HEK293 (cell line): ENCODE measurements at regions of chr1 and their contacts with region 1.

Region 1: GRCh38 chr1:155001675-155002463 is 733 bp upstream of the ZBTB7B start:
- H3K4me3 ChIP-seq: peak overlapping the region; percentile 50
- H3K27ac ChIP-seq: peak overlapping the region; percentile 83; the same call in 1 of the 2 replicates
- H3K4me1 ChIP-seq: peaks cover 13% of the 10 kb centered on the region
- CTCF ChIP-seq: peak; percentile 95

Region 2: GRCh38 chr1:154324669-154325582 is 676.9 kb before region 1 on chr1 and contains the start of gene ATP8B2:
- CTCF ChIA-PET with region 1: no interaction called
- POLR2A ChIA-PET with region 1: no interaction called
- H3K4me3 ChIP-seq: peak within 1 kb of the TSS; percentile 49
- H3K27ac ChIP-seq: peak within 1 kb of the TSS; percentile 25; the same call in 1 of the 2 replicates
- H3K4me1 ChIP-seq: peaks cover 12% of the 10 kb centered on the region
- CTCF ChIP-seq: peak; percentile 96

Region 3: DNA sequence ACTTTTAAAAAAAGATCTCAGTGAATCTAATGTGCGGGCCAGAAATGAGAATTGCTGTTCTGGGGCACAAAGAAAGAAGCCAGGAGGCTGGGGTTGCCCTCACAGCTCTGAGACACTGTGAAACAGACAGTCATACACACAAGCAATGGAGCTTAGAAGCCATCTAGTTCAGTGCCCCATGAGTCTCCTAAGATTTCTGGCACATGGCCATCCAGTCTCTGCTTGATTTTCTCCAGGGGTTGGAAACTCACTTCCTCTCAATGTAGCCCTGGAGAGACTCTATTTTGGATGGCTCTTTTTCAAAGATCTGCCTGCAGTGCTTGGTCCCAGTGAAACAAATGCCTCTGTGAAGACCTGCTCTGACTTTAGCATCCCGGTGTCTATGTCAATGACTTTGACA is 170.4 kb before region 1 on chr1:
- CTCF ChIA-PET with region 1: no interaction called
- POLR2A ChIA-PET with region 1: no interaction called
- H3K4me3 ChIP-seq: no peak overlapping the region
- H3K27ac ChIP-seq: no peak overlapping the region
- H3K4me1 ChIP-seq: no peaks in the 10 kb centered on the region
- CTCF ChIP-seq: no peak

Region 4: DNA sequence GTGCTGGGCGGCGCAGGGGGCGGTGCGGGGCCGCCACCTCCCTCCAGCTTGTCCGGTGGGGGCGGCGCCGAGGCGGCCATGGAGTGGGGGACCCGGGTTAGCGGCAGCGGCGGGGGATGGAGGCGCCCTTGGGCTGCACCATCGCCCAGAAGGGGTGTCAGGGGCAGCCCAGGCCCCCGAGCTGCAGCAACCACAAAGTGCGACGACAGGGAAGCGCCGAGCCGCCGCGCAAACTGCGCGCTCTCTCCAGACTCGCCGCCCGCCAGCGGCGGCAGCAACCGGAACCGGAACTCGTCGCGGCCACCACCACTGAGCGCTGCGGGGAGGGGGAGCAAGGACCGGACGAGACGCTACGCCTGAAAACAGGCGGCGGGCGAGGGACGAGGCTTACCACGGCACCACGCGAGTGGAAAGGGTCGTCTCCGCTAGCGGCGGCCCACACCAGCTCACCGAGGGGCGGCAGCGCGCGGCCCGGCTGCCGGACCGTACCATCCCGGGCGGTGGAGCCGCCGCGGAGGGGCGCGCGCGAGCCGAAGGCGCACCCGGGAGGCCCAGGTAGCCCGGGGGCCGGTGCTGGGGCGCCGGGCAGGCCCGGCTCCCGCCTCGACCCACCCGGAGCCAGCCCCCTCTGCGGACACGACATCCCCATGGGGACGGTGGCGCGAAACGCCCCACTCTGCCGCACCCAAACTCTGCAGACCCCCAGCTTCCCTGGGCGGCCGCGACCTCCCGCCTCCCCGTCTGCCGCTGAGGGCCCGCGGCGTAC is 40.2 kb before region 1 on chr1 and contains the start of gene PYGO2:
- CTCF ChIA-PET with region 1: interaction called, 12 read pairs
- POLR2A ChIA-PET with region 1: interaction called, 4 read pairs
- H3K4me3 ChIP-seq: peak within 1 kb of the TSS; percentile 90
- H3K27ac ChIP-seq: peak within 1 kb of the TSS; percentile 94
- H3K4me1 ChIP-seq: peaks cover 8% of the 10 kb centered on the region
- CTCF ChIP-seq: peak; percentile 87; the same call in 1 of the 2 replicates

Region 5: GRCh38 chr1:154982897-154983648 is 18.8 kb before region 1 on chr1 and contains the start of gene FLAD1:
- CTCF ChIA-PET with region 1: interaction called, 55 read pairs
- POLR2A ChIA-PET with region 1: interaction called, 9 read pairs
- H3K4me3 ChIP-seq: peak within 1 kb of the TSS; percentile 70
- H3K27ac ChIP-seq: peak within 1 kb of the TSS; percentile 73
- H3K4me1 ChIP-seq: no peaks in the 10 kb centered on the region
- CTCF ChIP-seq: no peak

Region 6: DNA sequence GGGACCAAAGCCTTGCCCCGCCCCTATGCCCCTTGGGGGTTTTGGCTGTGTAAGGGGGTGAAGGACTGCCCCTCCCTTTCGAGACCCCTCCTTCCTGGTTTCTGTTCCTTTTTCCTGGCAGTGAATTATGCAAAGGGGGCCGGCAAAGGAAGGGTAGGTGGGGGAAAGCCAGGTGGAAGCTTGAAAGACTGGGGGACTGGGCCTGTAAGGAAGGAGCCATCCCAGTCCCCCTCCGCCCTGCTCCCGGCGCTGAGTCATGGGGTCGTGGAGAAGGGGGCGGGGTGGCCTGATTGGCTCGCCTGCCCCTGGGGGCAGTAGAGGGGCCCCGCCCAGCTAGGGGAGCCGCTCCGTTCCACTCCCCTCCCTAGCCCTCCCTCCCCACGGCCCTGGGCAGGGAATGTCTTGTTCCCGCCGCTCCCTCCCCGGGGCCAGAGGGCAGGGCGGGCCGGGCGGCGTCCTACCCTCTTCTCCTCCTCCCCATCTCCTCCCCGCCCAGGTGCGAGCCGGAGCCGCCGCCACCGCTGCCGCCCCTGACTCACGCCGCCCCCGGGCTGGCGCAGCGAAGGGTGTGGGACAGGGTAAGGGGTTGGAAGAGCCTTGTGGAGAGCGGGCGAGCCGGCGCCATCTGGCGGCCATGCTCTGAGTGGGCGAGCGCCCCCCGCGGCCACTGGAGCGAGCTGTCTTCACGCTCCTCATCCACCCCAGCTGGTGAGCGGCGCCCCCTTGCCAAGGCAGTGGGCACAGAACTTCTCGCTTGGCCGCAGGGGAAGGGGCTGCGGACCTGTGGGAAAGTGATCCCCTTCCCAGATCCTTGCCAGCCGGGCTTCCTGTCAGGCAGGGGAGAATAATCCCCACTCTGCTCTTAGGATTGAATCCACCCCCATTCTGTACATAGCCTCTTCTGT is 15.4 kb after region 1 on chr1:
- CTCF ChIA-PET with region 1: interaction called, 30 read pairs
- POLR2A ChIA-PET with region 1: interaction called, 12 read pairs
- H3K4me3 ChIP-seq: peak overlapping the region; percentile 31
- H3K27ac ChIP-seq: peak overlapping the region; percentile 48
- H3K4me1 ChIP-seq: peaks cover 7% of the 10 kb centered on the region
- CTCF ChIP-seq: peak; percentile 100

Region 7: DNA sequence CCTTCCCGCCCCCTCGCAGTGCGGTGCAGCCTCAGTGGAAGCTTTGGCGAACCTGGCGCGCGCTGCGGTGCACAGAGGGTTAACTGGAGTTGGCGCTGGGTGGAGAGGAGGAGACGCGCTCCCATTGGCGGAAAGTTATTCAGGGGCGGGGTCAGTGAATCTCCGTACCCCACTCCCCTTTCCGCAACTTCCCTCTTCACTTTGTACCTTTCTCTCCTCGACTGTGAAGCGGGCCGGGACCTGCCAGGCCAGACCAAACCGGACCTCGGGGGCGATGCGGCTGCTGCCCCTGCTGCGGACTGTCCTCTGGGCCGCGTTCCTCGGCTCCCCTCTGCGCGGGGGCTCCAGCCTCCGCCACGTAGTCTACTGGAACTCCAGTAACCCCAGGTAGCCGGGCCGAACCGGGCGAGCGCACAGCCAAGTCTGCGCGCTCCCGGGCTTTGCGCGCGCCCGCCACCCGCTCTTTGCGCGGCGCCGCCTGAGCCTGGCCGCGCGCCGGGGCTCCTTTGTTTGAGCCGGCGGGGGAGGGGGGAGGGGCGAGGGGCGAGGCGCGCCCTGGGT is 61.8 kb after region 1 on chr1 and contains the start of gene EFNA4:
- CTCF ChIA-PET with region 1: interaction called, 15 read pairs
- POLR2A ChIA-PET with region 1: no interaction called
- H3K4me3 ChIP-seq: peak within 1 kb of the TSS; percentile 88
- H3K27ac ChIP-seq: peak within 1 kb of the TSS; percentile 64; the same call in 1 of the 2 replicates
- H3K4me1 ChIP-seq: no peaks in the 10 kb centered on the region; the same call in none of the 2 replicates
- CTCF ChIP-seq: no peak